ENCODE measurements at regions of chr9 and their contacts with region 1.

Region 1: DNA sequence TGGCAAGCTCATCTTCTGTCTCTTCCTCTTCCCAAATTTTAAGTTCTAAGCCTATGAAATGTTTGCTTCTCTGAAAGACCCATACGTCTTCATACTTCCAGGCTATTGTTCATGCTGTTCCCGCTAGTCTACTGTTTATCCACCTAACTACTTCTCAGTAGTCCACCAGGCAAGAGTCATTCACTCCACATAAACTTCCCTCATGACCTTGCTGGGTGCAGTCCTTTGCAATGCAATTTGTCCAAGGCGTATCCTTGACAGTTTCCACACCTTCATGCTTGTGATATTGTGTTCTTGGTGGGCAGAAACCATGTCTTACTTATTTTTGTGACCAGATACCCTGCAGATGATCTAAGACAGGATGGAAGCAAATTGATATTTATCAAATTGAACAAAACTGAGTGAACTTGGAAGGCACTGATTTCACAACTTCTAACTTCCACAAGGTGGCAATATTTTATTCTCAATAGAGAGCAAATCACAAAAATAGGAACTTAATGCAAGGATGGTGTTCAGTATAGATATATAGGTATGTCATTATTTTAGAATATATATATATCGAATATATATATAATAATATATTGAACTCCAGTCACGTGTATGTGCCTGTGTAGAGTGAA is 30.3 kb downstream of the TYRP1 start:
- DNase-seq: no peak
- ATAC-seq: peak; percentile 60
- H3K4me3 ChIP-seq: no peak overlapping the region
- H3K27ac ChIP-seq: no peak overlapping the region
- H3K4me1 ChIP-seq: no peaks in the 10 kb centered on the region
- H3K27me3 ChIP-seq: no peaks in the 10 kb centered on the region
- CTCF ChIP-seq: peak; percentile 17 to 43

Region 2: GRCh38 chr9:12884737-12885414 is 161.4 kb after region 1 on chr9:
- intact Hi-C with region 1: loop called in 1 of 2 experiments (anchors 10 kb)
- DNase-seq: no peak
- ATAC-seq: peak; percentile 92
- H3K4me3 ChIP-seq: no peak overlapping the region
- H3K27ac ChIP-seq: no peak overlapping the region
- H3K4me1 ChIP-seq: no peaks in the 10 kb centered on the region
- H3K27me3 ChIP-seq: no peaks in the 10 kb centered on the region
- CTCF ChIP-seq: peak in 1 of 2 donors; percentile 34

Region 3: GRCh38 chr9:13088720-13089427 is 365.4 kb after region 1 on chr9:
- intact Hi-C with region 1: loop called in 1 of 2 experiments (anchors 5 kb)
- DNase-seq: peak in 2 of 4 donors; percentile 63 to 75
- ATAC-seq: peak; percentile 87
- H3K4me3 ChIP-seq: no peak overlapping the region
- H3K27ac ChIP-seq: no peak overlapping the region
- H3K4me1 ChIP-seq: no peaks in the 10 kb centered on the region
- H3K27me3 ChIP-seq: no peaks in the 10 kb centered on the region
- CTCF ChIP-seq: peak; percentile 52 to 73

Measured in left lung (tissue), 14 donors.